ENCODE measurements at regions of chr16 and their contacts with region 1.

Region 1: DNA sequence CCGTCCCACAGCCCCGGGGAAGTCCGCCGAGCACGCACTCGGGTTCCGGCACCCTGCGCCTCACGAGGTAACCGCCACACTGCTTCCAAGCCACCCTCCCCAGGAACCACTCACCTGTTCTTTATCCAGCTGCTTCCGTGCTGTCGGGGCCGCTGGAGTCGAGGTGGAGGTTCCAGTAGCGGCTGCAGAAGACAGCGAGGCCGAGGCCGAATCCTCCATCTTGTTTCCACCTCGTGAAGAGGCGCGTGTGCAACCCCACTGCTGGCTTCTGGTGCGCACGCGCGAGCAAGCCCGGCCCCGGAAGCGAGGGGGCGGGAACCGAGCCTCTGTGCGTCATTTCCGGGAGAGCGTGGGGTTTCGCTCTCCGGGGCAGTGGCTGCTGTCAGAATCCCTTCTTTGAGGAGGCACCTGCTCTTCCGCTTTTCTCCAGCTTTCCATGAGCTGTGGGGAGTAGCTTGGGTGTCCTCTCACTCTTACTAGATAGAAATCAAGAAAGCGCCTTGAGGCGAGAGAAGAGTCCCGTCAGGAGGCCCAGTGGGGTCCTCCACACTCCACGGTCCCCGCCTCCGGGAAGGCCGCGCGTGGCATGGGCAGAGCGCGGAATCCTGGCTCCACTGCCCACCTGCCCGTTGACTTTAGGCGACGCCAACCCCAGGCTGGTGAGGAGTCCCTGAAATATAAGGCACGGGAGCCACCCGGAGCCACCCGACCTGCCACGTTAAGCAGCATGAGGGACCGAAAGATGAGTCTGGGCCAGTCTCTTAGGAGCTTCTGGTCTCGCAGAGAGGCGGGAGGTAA is at the start of gene RSL1D1:
- DNase-seq: peak; percentile 87
- ATAC-seq: peak; percentile 85
- H3K4me3 ChIP-seq: peak within 1 kb of the TSS; percentile 99
- H3K27ac ChIP-seq: peak within 1 kb of the TSS; percentile 66
- H3K4me1 ChIP-seq: no peaks in the 10 kb centered on the region; the same call in 1 of the 2 replicates
- H3K27me3 ChIP-seq: no peaks in the 10 kb centered on the region
- CTCF ChIP-seq: no peak
- EP300 ChIP-seq: no peak
- POLR2A ChIP-seq: peak; percentile 99
- RAD21 ChIP-seq: no peak
- polyA plus RNA-seq, gene RSL1D1: 288 to 367 TPM

Region 2: DNA sequence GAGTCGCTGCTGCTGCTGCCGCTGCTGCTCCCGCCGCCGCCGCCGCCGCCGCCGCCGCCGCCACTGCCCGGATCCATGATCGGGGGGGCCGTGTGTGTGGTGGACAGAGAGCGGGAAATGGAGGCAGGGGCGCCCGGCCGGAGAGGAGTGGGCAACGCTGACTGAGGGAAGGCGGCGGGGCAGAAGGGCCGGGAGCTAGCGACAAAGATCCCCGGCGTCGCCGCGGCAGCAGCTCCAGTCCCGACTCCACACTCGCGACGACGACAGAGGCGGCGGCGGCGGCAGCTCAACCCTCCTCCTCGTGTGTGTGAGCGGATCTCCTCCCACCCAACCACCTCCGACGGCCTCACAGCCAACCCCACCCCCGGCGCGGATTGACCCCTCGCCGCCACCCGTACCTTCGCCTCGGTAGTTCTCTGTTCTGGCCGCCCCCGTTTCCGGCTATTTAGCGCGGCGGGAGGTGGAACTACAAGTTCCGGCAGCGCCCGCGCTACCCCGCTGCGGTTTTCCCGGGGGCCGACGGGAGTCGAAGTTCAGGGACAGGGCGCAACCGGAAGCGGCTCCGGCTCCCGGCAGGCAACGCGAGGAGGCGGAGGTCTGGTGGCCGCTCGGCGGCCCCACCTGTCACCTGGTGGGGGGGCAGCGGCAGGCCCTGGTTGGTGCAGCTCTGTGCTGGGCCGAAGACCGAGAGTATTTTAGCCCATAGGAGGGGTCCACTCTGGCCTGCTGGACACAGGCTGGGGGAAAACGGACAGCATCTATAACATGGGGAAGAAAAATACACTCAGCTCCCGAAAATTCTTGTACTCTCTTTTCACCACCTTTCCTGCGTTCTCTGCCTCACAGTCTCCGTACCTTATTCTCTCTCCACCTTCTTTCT is 64.4 kb after region 1 on chr16 and contains the start of gene GSPT1:
- CTCF ChIA-PET with region 1: no interaction called
- POLR2A ChIA-PET with region 1: no interaction called
- RAD21 ChIA-PET with region 1: no interaction called
- SMC1A ChIA-PET with region 1: no interaction called
- in situ Hi-C with region 1: no loop called
- intact Hi-C with region 1: loop called (anchors 2 kb)
- DNase-seq: peak; percentile 90
- ATAC-seq: peak; percentile 89
- H3K4me3 ChIP-seq: peak within 1 kb of the TSS; percentile 71
- H3K27ac ChIP-seq: peak within 1 kb of the TSS; percentile 87
- H3K4me1 ChIP-seq: peaks cover 9% of the 10 kb centered on the region
- H3K27me3 ChIP-seq: no peaks in the 10 kb centered on the region
- CTCF ChIP-seq: 0 out of 6 replicates have a peak, but pooled peaks of 2 of the 3 experiments have one; percentile 16 to 17
- EP300 ChIP-seq: no peak
- POLR2A ChIP-seq: peak; percentile 92
- RAD21 ChIP-seq: no peak
- polyA plus RNA-seq, gene GSPT1: 46.7 to 63.5 TPM

Region 3: DNA sequence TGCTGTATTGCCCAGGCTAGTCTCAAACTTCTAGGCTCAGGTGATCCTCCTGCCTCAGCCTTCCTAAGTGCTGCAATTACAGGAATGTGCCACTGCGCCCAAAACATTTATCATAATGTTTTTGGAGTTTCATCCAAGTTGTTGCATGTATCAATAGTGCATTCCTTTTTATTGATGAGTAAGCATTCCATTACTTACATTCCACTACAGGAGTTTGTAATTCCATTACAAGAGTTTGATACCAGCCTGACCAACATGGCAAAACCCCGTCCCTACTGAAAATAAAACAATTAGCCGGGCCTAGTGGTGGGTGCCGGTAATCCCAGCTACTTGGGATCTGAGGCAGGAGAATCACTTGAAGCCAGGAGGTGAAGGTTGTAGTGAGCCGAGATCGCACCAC is 341.5 kb after region 1 on chr16:
- CTCF ChIA-PET with region 1: no interaction called
- POLR2A ChIA-PET with region 1: no interaction called
- RAD21 ChIA-PET with region 1: no interaction called
- SMC1A ChIA-PET with region 1: no interaction called
- in situ Hi-C with region 1: no loop called
- intact Hi-C with region 1: no loop called
- DNase-seq: no peak
- ATAC-seq: no peak
- H3K4me3 ChIP-seq: no peak overlapping the region
- H3K27ac ChIP-seq: no peak overlapping the region
- H3K4me1 ChIP-seq: no peaks in the 10 kb centered on the region
- H3K27me3 ChIP-seq: no peaks in the 10 kb centered on the region
- CTCF ChIP-seq: no peak
- EP300 ChIP-seq: no peak
- POLR2A ChIP-seq: no peak
- RAD21 ChIP-seq: no peak

Measured in GM12878 (cell line).